CD8-positive, alpha-beta memory T cell (primary cell): ENCODE measurements at regions of chr1 and their contacts with region 1.

Region 1: GRCh38 chr1:116737020-116737854 is 17.0 kb upstream of the CD2 start:
- DNase-seq: peak; percentile 53 to 81 (median 77)
- H3K4me3 ChIP-seq: peak overlapping the region; percentile 37
- H3K4me3 Mint-ChIP-seq: peak overlapping the region; percentile 66 to 81 (median 79)
- H3K27ac ChIP-seq: peak overlapping the region; percentile 79
- H3K27ac Mint-ChIP-seq: peak overlapping the region; percentile 99 to 100 (median 100)
- H3K4me1 ChIP-seq: peaks cover 42% of the 10 kb centered on the region
- H3K4me1 Mint-ChIP-seq: peaks cover 43 to 47% (median 47%) of the 10 kb centered on the region in 3 donors
- H3K27me3 ChIP-seq: no peaks in the 10 kb centered on the region
- H3K27me3 Mint-ChIP-seq: peaks cover 0 to 1% of the 10 kb centered on the region in 2 donors

Region 2: DNA sequence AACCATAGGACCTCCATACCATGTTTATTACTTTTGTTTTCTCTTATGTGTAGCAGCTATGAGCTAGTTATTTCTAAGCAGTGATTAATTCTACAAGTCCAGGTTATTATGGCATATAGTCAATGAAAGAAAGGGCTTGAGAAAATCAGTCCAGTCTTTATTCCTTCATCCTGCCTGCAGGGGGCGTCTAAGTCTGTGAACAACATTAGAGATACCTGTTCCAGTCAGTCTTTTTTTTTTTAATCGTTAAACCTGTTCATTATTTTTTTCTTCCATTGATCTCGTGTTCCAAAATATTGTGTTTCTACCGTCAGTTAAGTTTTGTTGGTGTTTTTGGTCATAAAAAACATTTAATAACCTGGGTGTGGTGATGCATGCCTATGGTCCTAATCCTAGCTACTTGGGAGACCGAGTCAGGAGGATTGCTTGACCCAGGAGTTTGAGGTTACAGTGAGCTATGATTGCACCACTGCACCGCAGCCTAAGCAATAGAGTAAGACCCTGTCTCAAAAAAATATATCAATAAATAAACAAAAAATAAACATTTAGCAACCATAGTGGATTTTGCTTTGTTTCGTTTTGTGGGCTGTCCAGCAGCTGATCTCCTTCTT is 12.4 kb before region 1 on chr1:
- CTCF ChIA-PET with region 1: interaction called, 26 read pairs
- POLR2A ChIA-PET with region 1: no interaction called
- DNase-seq: peak; percentile 64 to 82 (median 68)
- H3K4me3 ChIP-seq: no peak overlapping the region
- H3K4me3 Mint-ChIP-seq: no peak overlapping the region
- H3K27ac ChIP-seq: no peak overlapping the region
- H3K27ac Mint-ChIP-seq: no peak overlapping the region
- H3K4me1 ChIP-seq: no peaks in the 10 kb centered on the region
- H3K4me1 Mint-ChIP-seq: peaks cover 16 to 27% (median 25%) of the 10 kb centered on the region in 3 donors
- H3K27me3 ChIP-seq: no peaks in the 10 kb centered on the region
- H3K27me3 Mint-ChIP-seq: no peaks in the 10 kb centered on the region

Region 3: DNA sequence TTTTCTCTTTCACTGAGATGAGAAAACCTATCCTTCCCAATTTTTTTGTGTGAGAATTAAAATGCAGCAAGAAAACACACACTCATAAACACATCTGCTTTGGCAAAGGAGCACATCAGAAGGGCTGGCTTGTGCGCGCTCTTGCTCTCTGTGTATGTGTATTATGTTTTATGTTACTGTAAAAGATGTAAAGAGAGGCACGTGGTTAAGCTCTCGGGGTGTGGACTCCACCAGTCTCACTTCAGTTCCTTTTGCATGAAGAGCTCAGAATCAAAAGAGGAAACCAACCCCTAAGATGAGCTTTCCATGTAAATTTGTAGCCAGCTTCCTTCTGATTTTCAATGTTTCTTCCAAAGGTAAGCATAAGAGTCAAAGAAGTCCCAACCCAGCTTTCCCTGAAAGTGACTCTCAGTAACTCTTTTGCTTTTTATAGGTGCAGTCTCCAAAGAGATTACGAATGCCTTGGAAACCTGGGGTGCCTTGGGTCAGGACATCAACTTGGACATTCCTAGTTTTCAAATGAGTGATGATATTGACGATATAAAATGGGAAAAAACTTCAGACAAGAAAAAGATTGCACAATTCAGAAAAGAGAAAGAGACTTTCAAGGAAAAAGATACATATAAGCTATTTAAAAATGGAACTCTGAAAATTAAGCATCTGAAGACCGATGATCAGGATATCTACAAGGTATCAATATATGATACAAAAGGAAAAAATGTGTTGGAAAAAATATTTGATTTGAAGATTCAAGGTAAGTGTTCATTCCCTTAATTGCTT is 17.2 kb after region 1 on chr1 and contains the start of gene CD2:
- CTCF ChIA-PET with region 1: interaction called, 47 read pairs
- POLR2A ChIA-PET with region 1: interaction called, 25 read pairs
- DNase-seq: peak in 3 of 5 donors; percentile 55 to 71 (median 70)
- H3K4me3 ChIP-seq: peak within 1 kb of the TSS; percentile 85
- H3K4me3 Mint-ChIP-seq: peak within 1 kb of the TSS; percentile 97 to 100 (median 99)
- H3K27ac ChIP-seq: peak within 1 kb of the TSS; percentile 76
- H3K27ac Mint-ChIP-seq: peak within 1 kb of the TSS; percentile 95 to 99 (median 98)
- H3K4me1 ChIP-seq: peaks cover 35% of the 10 kb centered on the region
- H3K4me1 Mint-ChIP-seq: peaks cover 35 to 48% (median 45%) of the 10 kb centered on the region in 3 donors
- H3K27me3 ChIP-seq: no peaks in the 10 kb centered on the region
- H3K27me3 Mint-ChIP-seq: peaks cover 0 to 2% of the 10 kb centered on the region in 2 donors
- total RNA-seq, gene CD2: 353 to 364 TPM

Region 4: DNA sequence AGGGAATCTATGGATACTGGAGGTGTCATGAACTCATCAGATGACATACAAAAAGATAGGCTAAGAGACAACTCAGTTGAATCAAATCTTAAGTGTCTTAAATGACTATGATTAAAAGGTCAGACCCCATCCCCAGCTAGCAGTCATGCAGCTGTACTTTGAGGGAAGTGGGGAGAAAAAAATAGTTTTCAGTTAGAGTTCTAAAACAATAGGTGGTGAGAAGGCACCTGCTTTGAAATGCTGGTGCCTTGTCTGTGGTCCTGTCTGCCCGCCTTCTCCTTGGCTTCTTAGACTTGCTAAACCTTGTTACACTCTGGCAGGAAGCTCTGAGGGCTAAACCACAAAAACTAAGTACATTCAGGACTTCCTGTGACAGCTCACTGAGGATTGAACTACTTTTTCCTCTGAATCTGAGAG is 32.3 kb after region 1 on chr1:
- CTCF ChIA-PET with region 1: interaction called, 169 read pairs
- POLR2A ChIA-PET with region 1: interaction called, 42 read pairs
- DNase-seq: peak; percentile 56 to 89 (median 88)
- H3K4me3 ChIP-seq: peak overlapping the region; percentile 41
- H3K4me3 Mint-ChIP-seq: peak overlapping the region; percentile 34 to 97 (median 82)
- H3K27ac ChIP-seq: peak overlapping the region; percentile 40
- H3K27ac Mint-ChIP-seq: peak overlapping the region; percentile 98 to 100 (median 98)
- H3K4me1 ChIP-seq: peaks cover 87% of the 10 kb centered on the region
- H3K4me1 Mint-ChIP-seq: peaks cover 88 to 92% (median 91%) of the 10 kb centered on the region in 3 donors
- H3K27me3 ChIP-seq: no peaks in the 10 kb centered on the region
- H3K27me3 Mint-ChIP-seq: no peaks in the 10 kb centered on the region

Region 5: DNA sequence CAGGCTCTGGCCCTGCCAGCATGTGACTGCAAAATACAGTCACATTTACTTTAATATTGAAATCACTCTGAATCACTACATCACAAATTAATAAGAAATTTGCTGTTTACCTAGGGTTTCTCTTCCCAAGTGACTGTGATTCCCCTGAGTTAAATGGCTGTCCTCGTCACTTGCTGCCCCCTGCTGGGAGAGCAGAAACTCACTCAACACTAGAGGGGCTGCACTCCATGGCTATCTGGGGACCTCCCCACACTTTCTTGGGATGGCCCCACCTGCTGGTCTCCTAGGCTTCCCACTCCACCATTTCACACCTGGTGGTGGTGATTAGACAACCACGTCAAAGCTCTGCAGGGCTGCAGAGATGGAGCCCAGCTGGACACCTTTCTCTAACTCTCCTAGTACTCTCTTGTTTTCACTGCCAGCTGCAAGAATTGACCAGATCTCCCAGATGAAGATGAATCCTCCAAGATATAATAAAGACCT is 80.4 kb after region 1 on chr1:
- CTCF ChIA-PET with region 1: interaction called, 172 read pairs
- POLR2A ChIA-PET with region 1: interaction called, 27 read pairs
- DNase-seq: peak; percentile 63 to 84 (median 69)
- H3K4me3 ChIP-seq: no peak overlapping the region
- H3K4me3 Mint-ChIP-seq: peak overlapping the region; percentile 47 to 78 (median 71)
- H3K27ac ChIP-seq: no peak overlapping the region
- H3K27ac Mint-ChIP-seq: peak overlapping the region; percentile 72 to 95 (median 88)
- H3K4me1 ChIP-seq: peaks cover 30% of the 10 kb centered on the region
- H3K4me1 Mint-ChIP-seq: peaks cover 38 to 53% (median 45%) of the 10 kb centered on the region in 3 donors
- H3K27me3 ChIP-seq: no peaks in the 10 kb centered on the region
- H3K27me3 Mint-ChIP-seq: no peaks in the 10 kb centered on the region

Region 6: GRCh38 chr1:117059678-117060440 is 322.6 kb after region 1 on chr1 and contains the start of gene TTF2:
- CTCF ChIA-PET with region 1: interaction called, 21 read pairs
- POLR2A ChIA-PET with region 1: interaction called, 6 read pairs
- DNase-seq: peak; percentile 91 to 99 (median 98)
- H3K4me3 ChIP-seq: peak within 1 kb of the TSS; percentile 76
- H3K4me3 Mint-ChIP-seq: no peak within 1 kb of the TSS
- H3K27ac ChIP-seq: peak within 1 kb of the TSS; percentile 81
- H3K27ac Mint-ChIP-seq: peak within 1 kb of the TSS in 3 of 8 donors; percentile 64 to 90 (median 78)
- H3K4me1 ChIP-seq: peaks cover 10% of the 10 kb centered on the region
- H3K4me1 Mint-ChIP-seq: peaks cover 39 to 58% (median 56%) of the 10 kb centered on the region in 3 donors
- H3K27me3 ChIP-seq: no peaks in the 10 kb centered on the region
- H3K27me3 Mint-ChIP-seq: no peaks in the 10 kb centered on the region
- total RNA-seq, gene TTF2: 89.0 TPM